Activated B cell treated with CpG ODN at 0.5 μM for 24 hours (primary cell): ENCODE measurements at regions of chr22 and their contacts with region 1.

Region 1: GRCh38 chr22:40436505-40437451 is 66.4 kb downstream of the SGSM3 start:
- DNase-seq: peak; percentile 50
- ATAC-seq: peak; percentile 74
- H3K4me3 Mint-ChIP-seq: peak overlapping the region; percentile 72
- H3K27ac Mint-ChIP-seq: peak overlapping the region; percentile 91
- H3K4me1 Mint-ChIP-seq: peaks cover 92% of the 10 kb centered on the region
- H3K27me3 Mint-ChIP-seq: no peaks in the 10 kb centered on the region
- CTCF ChIP-seq: no peak

Region 2: DNA sequence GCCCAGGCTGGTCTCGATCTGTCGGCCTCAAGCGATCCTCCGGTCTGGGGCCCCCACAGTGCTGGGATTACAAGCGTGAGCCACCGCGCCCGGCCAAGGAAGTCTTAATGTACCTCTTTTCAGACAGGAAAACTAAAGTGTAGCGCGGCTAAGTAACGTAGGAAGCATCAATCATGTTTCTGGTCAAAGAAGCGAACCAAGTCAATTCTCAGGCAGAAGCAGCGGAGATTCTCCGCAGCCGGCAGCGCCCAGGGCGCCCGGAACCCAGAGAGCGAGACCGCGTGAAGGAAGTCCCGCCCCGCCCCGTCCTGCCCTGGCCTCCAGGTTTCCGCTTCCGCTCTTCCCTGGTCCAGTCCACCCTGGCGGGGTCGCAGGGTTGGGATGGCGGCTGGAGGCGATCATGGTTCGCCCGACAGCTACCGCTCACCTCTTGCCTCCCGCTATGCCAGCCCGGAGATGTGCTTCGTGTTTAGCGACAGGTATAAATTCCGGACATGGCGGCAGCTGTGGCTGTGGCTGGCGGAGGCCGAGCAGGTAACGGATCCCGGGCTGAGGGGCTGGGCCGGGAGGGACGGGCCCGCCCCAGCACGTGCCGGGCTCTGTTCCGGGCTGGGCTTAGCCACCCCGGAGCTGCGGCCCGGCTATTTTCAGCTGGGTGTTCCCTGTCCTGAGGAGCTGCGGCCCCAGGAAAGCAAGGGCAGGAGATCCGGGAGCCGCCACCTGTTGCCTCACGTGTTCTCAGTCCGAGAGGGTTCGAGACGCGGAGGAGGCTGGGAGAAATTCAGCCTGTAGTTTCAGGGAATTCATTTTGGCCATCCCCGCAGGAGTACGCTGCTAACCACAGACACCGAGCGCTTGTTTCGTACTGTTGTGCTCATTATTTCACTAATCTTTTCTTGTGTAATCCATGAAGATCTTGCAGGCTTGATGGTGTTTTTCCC is 90.3 kb before region 1 on chr22 and contains the start of gene ADSL:
- CTCF ChIA-PET with region 1: interaction called, 4 read pairs
- POLR2A ChIA-PET with region 1: interaction called, 26 read pairs
- intact Hi-C with region 1: no loop called
- DNase-seq: peak; percentile 85
- ATAC-seq: peak; percentile 91
- H3K4me3 Mint-ChIP-seq: peak within 1 kb of the TSS; percentile 98
- H3K27ac Mint-ChIP-seq: peak within 1 kb of the TSS; percentile 98
- H3K4me1 Mint-ChIP-seq: peaks cover 34% of the 10 kb centered on the region
- H3K27me3 Mint-ChIP-seq: no peaks in the 10 kb centered on the region
- CTCF ChIP-seq: no peak
- total RNA-seq, gene ADSL: 102 and 109 TPM in 2 replicates

Region 3: GRCh38 chr22:40415531-40416266 is 21.1 kb before region 1 on chr22:
- CTCF ChIA-PET with region 1: interaction called, 17 read pairs
- POLR2A ChIA-PET with region 1: interaction called, 17 read pairs
- intact Hi-C with region 1: loop called (anchors 1 kb)
- DNase-seq: no peak
- ATAC-seq: peak; percentile 48
- H3K4me3 Mint-ChIP-seq: peak overlapping the region; percentile 75
- H3K27ac Mint-ChIP-seq: peak overlapping the region; percentile 91
- H3K4me1 Mint-ChIP-seq: peaks cover 80% of the 10 kb centered on the region
- H3K27me3 Mint-ChIP-seq: no peaks in the 10 kb centered on the region
- CTCF ChIP-seq: no peak

Region 4: DNA sequence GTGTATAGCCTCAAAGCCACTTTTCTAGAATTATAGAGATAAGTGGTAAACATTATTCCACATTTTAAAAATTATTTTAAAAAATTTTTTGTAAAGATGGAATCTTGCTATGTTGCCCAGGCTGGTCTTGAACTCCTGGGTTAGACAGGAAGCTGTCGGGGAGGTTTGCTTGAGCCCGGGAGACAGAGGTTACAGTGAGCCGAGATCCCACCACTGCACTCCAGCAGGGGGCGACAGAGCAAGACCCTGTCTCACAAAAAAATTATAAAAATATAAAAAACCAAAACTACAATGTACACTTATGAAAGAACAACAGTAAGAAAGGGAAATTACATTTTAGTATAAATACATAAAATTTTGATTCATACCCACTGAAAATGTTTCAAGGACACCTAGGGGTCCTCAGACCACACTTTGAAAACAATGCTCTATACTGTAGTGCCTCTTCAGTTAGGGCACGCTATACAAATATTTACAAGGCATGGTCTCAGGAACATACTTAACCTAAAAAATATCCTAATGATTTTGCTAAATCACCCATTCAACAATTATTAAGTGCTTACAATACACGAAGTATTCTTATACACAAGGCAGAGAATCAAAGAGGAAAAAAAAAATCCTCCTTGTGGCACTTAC is 88.6 kb after region 1 on chr22:
- CTCF ChIA-PET with region 1: interaction called, 33 read pairs
- POLR2A ChIA-PET with region 1: interaction called, 4 read pairs
- intact Hi-C with region 1: loop called (anchors 1 kb)
- DNase-seq: peak; percentile 50
- ATAC-seq: peak; percentile 63
- H3K4me3 Mint-ChIP-seq: no peak overlapping the region
- H3K27ac Mint-ChIP-seq: no peak overlapping the region
- H3K4me1 Mint-ChIP-seq: peaks cover 48% of the 10 kb centered on the region
- H3K27me3 Mint-ChIP-seq: no peaks in the 10 kb centered on the region
- CTCF ChIP-seq: peak; percentile 39

Region 5: GRCh38 chr22:40645579-40646197 is 208.9 kb after region 1 on chr22:
- CTCF ChIA-PET with region 1: interaction called, 104 read pairs
- POLR2A ChIA-PET with region 1: interaction called, 14 read pairs
- intact Hi-C with region 1: loop called (anchors 1 kb)
- DNase-seq: no peak
- ATAC-seq: no peak
- H3K4me3 Mint-ChIP-seq: no peak overlapping the region
- H3K27ac Mint-ChIP-seq: no peak overlapping the region
- H3K4me1 Mint-ChIP-seq: peaks cover 14% of the 10 kb centered on the region
- H3K27me3 Mint-ChIP-seq: no peaks in the 10 kb centered on the region
- CTCF ChIP-seq: no peak

Region 6: DNA sequence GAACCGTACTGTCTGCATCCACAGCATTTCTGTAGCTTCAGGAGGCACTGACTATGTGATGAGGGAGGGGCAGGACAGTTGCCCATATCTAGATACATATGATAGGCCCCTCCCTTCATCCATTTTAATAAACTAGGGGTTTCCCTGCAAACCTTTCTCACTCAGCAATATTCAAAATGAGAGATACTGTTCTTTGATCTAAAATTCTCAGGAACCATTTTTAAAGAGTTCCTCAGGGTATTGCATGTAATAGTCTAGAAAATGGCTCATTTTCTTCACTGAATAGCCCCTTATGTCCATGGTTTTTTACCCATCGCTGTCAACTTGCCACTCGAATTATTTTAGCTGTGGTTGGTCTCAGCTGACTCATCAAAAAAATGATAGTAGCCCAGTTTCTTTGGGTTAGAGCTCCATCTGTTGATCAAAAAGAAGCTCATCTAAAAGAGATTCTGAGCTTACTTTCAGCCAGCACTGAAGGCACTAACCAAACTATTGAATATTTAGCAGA is 462.1 kb after region 1 on chr22:
- CTCF ChIA-PET with region 1: interaction called, 14 read pairs
- POLR2A ChIA-PET with region 1: interaction called, 4 read pairs
- intact Hi-C with region 1: no loop called
- DNase-seq: no peak
- ATAC-seq: peak; percentile 71
- H3K4me3 Mint-ChIP-seq: no peak overlapping the region
- H3K27ac Mint-ChIP-seq: peak overlapping the region; percentile 21
- H3K4me1 Mint-ChIP-seq: peaks cover 3% of the 10 kb centered on the region
- H3K27me3 Mint-ChIP-seq: no peaks in the 10 kb centered on the region
- CTCF ChIP-seq: no peak